A549 (cell line): ENCODE measurements at regions of chr11 and their contacts with region 1.

Region 1: DNA sequence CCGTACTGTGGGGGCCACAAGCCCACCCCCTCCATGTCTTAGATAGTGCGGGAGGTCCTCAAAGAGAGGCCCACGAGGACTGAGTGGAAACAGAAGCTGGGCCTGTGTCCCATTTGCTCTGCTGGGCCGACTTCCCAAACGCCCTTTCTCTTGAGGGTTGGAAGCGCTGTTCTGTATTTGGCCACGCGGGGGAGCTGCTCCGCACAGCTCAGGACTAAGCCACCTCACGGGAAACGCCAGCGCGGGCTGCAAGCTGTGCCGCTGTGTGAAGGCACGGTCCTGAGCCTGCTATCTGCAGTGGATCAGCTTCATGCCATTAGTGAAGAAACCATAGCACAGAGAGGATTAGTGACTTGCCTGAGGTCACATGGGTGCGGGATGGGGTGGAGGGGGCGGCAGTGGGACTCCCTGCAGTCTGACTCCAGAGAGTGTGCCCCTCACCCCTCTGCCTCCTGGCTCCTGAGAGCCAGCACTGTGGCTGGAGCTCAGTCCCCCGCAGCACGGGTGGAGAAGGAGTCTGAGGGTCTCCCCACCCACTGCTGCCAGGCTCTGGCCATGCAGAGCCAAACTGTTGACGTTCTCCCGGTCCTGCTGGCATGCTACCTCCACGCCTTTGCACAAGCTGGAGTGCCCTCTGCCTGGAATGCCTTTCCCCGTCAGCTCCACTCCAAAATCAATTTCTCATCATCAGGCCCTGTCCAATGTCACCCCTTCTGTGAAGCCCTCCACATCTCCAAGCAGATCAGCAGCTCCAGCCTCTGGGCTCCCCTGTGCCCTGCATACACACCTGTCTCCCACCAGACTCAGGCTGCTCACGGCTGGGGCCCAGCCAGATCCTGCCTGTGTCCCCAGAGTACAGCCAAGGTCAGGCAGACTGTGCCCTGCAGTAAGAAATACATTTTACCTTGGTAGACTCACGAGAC is 51.5 kb upstream of the LRRC32 start:
- DNase-seq: peak; percentile 67 to 80
- ATAC-seq: peak; percentile 91 to 97
- H3K4me3 ChIP-seq: no peak overlapping the region
- H3K27ac ChIP-seq: peak overlapping the region in 1 of 2 experiments; percentile 61; a peak in 3 of 6 replicates
- H3K4me1 ChIP-seq: 0 out of 3 replicates have a peak, but pooled peaks cover 4% of the 10 kb centered on the region
- CTCF ChIP-seq: peak; percentile 83
- EP300 ChIP-seq: no peak
- POLR2A ChIP-seq: no peak
- RAD21 ChIP-seq: peak; percentile 68

Region 2: DNA sequence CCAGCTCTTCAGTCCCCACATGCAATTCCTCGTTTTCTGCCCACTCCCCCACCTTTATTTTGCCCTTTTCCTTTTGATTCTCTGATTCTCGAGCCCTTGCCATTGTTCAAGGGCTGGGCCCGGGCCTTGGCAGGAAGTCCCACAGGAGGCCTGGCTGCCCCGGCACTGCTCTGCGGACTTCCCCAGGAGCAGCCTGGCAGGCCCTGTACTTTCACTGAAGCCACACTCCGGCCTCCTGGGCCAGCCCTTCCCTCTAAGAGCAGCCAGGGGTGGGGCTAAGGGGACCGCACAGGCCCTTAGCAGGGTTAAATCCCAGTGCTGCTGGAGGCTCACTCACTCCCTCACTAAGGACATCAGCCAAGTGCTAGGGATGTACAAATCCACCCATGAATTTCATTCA is 55.6 kb before region 1 on chr11:
- CTCF ChIA-PET with region 1: no interaction called
- POLR2A ChIA-PET with region 1: no interaction called
- DNase-seq: no peak
- ATAC-seq: no peak
- H3K4me3 ChIP-seq: no peak overlapping the region
- H3K27ac ChIP-seq: no peak overlapping the region
- H3K4me1 ChIP-seq: peaks cover 8% of the 10 kb centered on the region; the same call in 1 of the 3 replicates
- CTCF ChIP-seq: no peak
- EP300 ChIP-seq: no peak
- POLR2A ChIP-seq: no peak
- RAD21 ChIP-seq: no peak

Region 3: DNA sequence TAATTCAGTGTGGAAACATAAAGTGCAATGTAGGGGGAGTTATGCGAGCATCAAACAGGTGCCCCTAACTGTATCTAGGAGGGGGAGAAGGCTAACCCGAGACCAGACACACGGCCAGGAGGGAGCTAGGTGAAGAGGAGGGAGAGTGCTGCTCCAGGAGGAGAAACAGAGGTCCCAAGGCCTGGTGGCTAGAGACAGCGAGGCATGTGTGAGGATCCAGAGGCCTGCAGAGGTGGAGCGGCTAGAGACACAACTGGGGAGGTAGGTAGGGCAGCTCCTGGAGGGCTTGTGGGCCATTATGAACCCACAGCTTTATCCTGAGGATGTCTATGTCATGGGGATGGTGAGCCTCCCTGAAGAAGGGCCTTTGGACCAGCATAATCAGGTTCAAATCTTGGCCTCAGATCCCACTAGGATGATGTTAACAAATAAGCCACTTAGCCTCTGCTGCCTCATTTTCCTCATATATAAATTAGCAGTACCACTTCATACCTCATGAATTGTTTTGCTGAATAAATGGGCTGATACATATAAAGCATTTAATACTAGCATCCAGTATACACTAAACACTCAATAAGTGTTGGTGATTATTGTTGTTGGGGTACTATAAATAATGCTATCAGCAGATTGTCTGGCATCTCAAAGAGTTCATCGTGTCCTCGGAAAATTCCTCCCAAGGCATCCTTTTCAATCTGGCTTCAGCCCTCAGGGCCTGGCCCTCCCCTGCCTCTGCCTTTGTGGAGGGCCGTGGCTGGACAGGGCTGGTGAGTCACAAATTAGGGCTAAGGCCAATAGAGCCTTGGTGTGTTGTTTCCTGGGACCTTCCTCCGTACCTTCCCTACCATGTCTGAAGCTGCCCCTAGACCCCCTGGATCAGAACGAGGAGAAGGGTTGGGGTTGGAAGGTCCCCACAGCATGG is 20.6 kb before region 1 on chr11:
- CTCF ChIA-PET with region 1: interaction called, 25 read pairs
- POLR2A ChIA-PET with region 1: no interaction called
- DNase-seq: no peak
- ATAC-seq: peak in 1 of 2 experiments; percentile 51; a peak in 3 of 6 replicates
- H3K4me3 ChIP-seq: no peak overlapping the region
- H3K27ac ChIP-seq: peak overlapping the region; percentile 76 to 89
- H3K4me1 ChIP-seq: peaks cover 36% of the 10 kb centered on the region
- CTCF ChIP-seq: no peak
- EP300 ChIP-seq: no peak
- POLR2A ChIP-seq: no peak
- RAD21 ChIP-seq: no peak

Region 4: GRCh38 chr11:76708946-76709678 is 12.9 kb before region 1 on chr11:
- CTCF ChIA-PET with region 1: interaction called, 26 read pairs
- POLR2A ChIA-PET with region 1: no interaction called
- DNase-seq: no peak
- ATAC-seq: 0 out of 6 replicates have a peak, but pooled peaks of 1 of the 2 experiments have one; percentile 39
- H3K4me3 ChIP-seq: no peak overlapping the region
- H3K27ac ChIP-seq: no peak overlapping the region
- H3K4me1 ChIP-seq: no peaks in the 10 kb centered on the region
- CTCF ChIP-seq: no peak
- EP300 ChIP-seq: no peak
- POLR2A ChIP-seq: no peak
- RAD21 ChIP-seq: no peak